ENCODE measurements at regions of chr1 and their contacts with region 1.

Region 1: DNA sequence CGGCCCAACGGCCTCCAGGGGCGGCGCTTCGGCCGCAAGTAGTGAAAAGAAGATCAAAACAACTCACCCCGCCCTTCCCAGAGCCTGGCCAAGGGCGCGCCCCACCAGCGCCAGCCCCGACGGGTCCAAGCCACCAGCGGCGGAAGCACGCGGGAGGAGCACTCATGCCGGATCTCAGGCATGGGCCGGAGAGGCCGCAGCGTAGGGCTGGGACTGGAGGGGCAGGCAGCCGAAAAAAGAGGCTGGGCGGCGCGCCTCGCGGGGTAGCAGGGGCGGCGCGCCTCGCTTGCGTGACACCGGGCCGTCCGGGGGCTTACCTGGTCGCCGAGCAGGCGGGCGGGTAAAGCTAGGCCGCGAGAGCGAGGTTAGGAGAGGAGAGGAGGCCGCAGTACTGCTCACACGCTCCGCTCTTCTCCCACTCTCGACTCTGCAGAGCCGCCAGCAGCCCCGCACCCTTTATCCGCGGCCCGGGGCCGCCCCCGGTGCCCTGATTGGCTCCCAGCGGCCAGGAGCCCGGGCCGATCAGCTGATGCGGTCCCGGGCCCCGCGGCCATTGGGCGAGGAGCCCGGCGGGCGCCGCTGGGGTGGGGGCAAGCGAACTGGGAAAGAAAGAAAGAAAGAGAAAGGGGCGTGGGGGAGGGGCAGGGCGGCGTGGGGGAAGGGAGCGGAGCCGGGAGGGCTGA is at the start of gene GLUL:
- DNase-seq: peak; percentile 81
- ATAC-seq: peak; percentile 89
- H3K4me3 Mint-ChIP-seq: peak within 1 kb of the TSS; percentile 86
- H3K27ac Mint-ChIP-seq: peak within 1 kb of the TSS; percentile 80
- H3K4me1 Mint-ChIP-seq: peaks cover 20% of the 10 kb centered on the region
- H3K27me3 Mint-ChIP-seq: peaks cover 13% of the 10 kb centered on the region
- total RNA-seq, gene GLUL: 63.5 to 87.5 TPM

Region 2: GRCh38 chr1:182029379-182030331 is 361.8 kb before region 1 on chr1:
- CTCF ChIA-PET with region 1: no interaction called
- POLR2A ChIA-PET with region 1: no interaction called
- intact Hi-C with region 1: loop called in 1 of 2 experiments (anchors 1 kb)
- DNase-seq: peak; percentile 99
- ATAC-seq: peak; percentile 96
- H3K4me3 Mint-ChIP-seq: peak overlapping the region; percentile 86
- H3K27ac Mint-ChIP-seq: peak overlapping the region; percentile 97
- H3K4me1 Mint-ChIP-seq: peaks cover 11% of the 10 kb centered on the region
- H3K27me3 Mint-ChIP-seq: no peaks in the 10 kb centered on the region

Region 3: GRCh38 chr1:182301467-182302198 is 89.9 kb before region 1 on chr1:
- CTCF ChIA-PET with region 1: interaction called, 5 read pairs
- POLR2A ChIA-PET with region 1: no interaction called
- intact Hi-C with region 1: loop called (anchors 2 to 5 kb)
- DNase-seq: peak; percentile 65
- ATAC-seq: peak; percentile 79
- H3K4me3 Mint-ChIP-seq: no peak overlapping the region
- H3K27ac Mint-ChIP-seq: peak overlapping the region; percentile 71
- H3K4me1 Mint-ChIP-seq: peaks cover 30% of the 10 kb centered on the region
- H3K27me3 Mint-ChIP-seq: no peaks in the 10 kb centered on the region

Region 4: DNA sequence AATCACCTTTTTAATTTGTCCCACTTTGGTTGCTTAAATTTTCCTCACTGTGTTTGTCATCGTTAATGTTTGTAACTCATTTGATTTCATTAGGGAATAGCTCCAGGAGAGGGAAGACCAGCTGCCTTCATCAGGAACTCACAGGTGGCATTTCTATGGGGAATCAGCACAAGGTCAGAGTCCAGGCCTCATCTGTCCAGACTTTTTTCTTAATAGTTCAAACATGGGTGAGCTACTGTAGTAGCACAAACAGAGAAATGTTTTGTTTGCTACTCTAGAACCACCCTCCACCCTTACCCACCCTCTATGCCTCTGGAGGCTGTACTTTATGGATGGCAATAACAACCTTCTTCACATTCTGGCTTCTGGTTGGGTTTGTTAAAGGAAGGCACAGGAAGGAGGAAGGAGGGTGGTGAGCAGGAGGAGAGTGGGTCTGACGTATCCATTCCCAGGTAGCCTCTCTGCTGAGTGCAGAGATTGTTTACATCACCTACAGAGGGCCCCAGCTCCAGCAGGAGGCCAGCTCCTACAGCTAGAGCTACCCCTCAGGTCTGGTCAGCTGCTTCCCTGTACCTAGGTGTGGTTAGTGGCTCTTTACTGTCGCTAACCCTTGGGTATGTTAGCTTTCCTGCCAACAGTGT is 17.1 kb after region 1 on chr1:
- CTCF ChIA-PET with region 1: interaction called, 12 read pairs
- POLR2A ChIA-PET with region 1: no interaction called
- intact Hi-C with region 1: no loop called
- DNase-seq: no peak
- ATAC-seq: no peak
- H3K4me3 Mint-ChIP-seq: no peak overlapping the region
- H3K27ac Mint-ChIP-seq: no peak overlapping the region
- H3K4me1 Mint-ChIP-seq: no peaks in the 10 kb centered on the region
- H3K27me3 Mint-ChIP-seq: peaks cover 21% of the 10 kb centered on the region

Measured in activated CD4-positive, alpha-beta T cell treated with anti-CD3 and anti-CD28 coated beads for 36 hours (primary cell).